ENCODE measurements at regions of chr7 and their contacts with region 1.

Region 1: DNA sequence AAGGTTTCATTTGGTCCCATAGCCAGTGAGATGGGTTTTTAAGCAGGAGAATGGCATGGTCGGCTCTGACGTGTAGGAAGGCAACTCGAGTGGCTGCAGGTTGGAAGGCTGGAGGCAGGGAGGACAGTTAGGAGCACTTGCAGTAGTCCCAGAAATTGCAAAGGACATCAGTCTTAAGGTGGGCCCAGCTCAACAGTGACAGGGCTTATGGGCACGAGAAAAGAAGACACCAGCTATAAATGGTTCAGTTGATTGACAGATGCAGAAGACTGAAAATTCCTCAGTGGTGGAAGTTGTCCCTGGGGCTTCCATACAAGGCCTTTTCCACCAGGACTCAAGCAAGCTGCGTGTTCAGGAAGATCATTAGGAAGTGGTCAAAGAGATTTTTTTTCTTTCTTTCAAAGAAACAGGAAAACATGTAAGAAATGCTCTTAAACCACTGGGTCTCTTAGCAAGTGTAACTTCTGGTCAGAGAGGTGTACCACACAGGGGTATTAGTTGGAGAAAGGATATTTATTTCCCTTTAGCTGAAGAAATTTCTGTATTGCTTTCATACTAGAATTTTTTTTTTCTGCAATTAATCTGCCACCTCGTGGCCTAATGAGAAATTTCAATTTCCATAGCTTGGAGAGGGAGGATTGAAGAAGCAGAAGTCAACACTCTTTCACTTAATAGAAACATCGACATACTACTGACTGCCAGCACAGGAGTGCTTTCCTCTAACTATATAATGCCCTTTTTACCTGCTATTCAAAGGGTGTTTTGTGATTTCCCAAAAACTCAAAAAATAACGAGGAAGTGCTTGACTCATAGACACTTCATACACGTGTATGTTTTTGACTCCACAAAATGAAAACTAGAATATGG is 177.4 kb upstream of the NAMPT start:
- DNase-seq: peak; percentile 76
- H3K4me3 Mint-ChIP-seq: no peak overlapping the region
- H3K27ac Mint-ChIP-seq: no peak overlapping the region
- H3K4me1 Mint-ChIP-seq: peaks cover 19% of the 10 kb centered on the region
- H3K27me3 Mint-ChIP-seq: no peaks in the 10 kb centered on the region

Region 2: GRCh38 chr7:106056513-106057203 is 405.6 kb before region 1 on chr7:
- intact Hi-C with region 1: loop called (anchors 2 kb)
- DNase-seq: peak; percentile 90
- H3K4me3 Mint-ChIP-seq: no peak overlapping the region
- H3K27ac Mint-ChIP-seq: no peak overlapping the region
- H3K4me1 Mint-ChIP-seq: peaks cover 28% of the 10 kb centered on the region
- H3K27me3 Mint-ChIP-seq: peaks cover 10% of the 10 kb centered on the region

Region 3: GRCh38 chr7:106165337-106165736 is 296.9 kb before region 1 on chr7:
- intact Hi-C with region 1: no loop called
- DNase-seq: no peak
- H3K4me3 Mint-ChIP-seq: no peak overlapping the region
- H3K27ac Mint-ChIP-seq: no peak overlapping the region
- H3K4me1 Mint-ChIP-seq: peaks cover 3% of the 10 kb centered on the region
- H3K27me3 Mint-ChIP-seq: peaks cover 23% of the 10 kb centered on the region

Region 4: DNA sequence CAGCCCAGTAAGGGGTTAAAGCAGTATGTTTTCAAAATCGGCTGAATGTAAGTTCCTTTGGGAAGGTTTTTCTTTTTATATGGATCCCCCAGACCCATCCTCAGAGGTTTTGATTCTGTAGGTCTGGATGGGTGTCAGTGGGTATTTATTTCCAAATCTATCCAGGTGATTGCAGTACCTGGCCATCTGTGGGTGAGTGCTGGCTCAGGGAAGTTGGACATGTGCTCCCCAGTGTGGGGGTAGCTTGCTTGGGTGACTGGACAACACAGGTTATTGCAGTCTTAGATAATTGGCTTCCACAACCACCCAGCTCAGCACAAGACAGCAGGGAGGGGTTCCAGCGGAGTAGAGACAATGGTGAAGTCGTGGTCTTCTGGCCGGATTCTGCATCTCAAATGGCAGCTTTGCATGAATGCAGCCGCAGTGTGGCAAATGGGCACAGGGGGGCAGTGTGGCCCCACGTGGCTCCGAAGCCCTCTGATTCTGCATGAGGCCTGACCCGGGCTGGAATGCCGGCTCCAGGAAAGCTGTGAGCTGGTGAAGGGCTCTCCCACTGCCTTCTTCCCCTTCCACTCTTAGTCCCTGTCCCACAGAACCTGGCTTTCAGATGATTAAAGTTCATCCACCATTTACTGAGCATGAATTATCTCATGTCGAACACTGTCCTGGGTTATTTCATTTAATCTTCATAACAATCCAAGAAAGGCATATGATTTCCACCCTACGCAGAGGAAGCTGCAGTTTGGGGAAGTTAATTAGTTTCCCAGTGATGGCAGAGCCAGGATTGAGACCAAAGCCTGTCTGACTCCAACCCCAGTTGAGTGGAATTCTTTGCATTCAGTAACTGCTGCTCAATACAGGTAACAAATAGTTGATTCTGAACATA is 285.6 kb before region 1 on chr7:
- intact Hi-C with region 1: loop called (anchors 1 kb)
- DNase-seq: peak; percentile 91
- H3K4me3 Mint-ChIP-seq: no peak overlapping the region
- H3K27ac Mint-ChIP-seq: no peak overlapping the region
- H3K4me1 Mint-ChIP-seq: peaks cover 4% of the 10 kb centered on the region
- H3K27me3 Mint-ChIP-seq: peaks cover 22% of the 10 kb centered on the region

Region 5: DNA sequence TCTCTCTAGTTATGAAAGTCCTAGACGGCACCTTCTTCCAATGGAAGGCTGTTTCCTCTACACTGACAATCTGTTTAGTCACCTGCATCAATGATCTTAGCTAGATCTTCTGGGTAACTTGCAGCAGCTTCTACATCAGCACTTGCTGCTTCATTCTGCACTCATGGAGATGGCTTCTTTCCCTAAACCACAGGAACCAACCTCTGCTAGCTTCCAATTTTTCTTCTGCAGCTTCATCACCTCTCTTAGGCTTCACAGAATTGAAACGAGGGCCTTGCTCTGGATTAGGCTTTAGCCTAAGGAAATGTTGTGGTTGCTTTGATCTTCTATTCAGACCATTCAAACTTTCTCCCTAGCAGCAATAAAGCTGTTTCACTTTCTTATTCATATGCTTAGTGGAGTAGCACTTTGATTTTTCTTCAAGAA is 202.1 kb before region 1 on chr7:
- intact Hi-C with region 1: loop called (anchors 5 kb)
- DNase-seq: peak; percentile 73
- H3K4me3 Mint-ChIP-seq: peak overlapping the region; percentile 62
- H3K27ac Mint-ChIP-seq: peak overlapping the region; percentile 78
- H3K4me1 Mint-ChIP-seq: peaks cover 37% of the 10 kb centered on the region
- H3K27me3 Mint-ChIP-seq: no peaks in the 10 kb centered on the region

Region 6: DNA sequence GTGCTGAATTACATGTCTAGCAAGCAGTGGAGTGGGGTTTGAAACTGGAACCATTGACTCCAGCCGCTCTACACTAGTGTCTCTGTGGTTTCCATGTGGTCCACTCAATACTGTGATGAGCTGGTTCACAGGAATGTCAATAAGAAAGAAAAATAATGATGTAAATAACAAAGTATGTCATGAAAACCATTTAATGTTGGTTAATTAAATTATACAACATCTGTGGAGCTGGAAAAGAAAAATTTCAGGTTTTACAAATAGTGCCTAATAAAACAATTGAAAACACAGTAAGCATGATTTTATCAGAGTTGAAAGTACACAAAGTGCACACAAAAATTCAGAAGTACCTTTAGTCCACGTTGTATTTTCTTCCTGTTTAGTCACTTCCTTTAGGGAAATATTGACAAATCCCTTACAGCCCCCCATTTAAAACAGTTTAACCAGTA is 148.7 kb before region 1 on chr7:
- intact Hi-C with region 1: no loop called
- DNase-seq: no peak
- H3K4me3 Mint-ChIP-seq: no peak overlapping the region
- H3K27ac Mint-ChIP-seq: no peak overlapping the region
- H3K4me1 Mint-ChIP-seq: peaks cover 16% of the 10 kb centered on the region
- H3K27me3 Mint-ChIP-seq: peaks cover 2% of the 10 kb centered on the region

Region 7: GRCh38 chr7:106367018-106367420 is 95.2 kb before region 1 on chr7:
- intact Hi-C with region 1: loop called (anchors 5 kb)
- DNase-seq: no peak
- H3K4me3 Mint-ChIP-seq: no peak overlapping the region
- H3K27ac Mint-ChIP-seq: peak overlapping the region; percentile 59
- H3K4me1 Mint-ChIP-seq: peaks cover 26% of the 10 kb centered on the region
- H3K27me3 Mint-ChIP-seq: peaks cover 14% of the 10 kb centered on the region

Region 8: DNA sequence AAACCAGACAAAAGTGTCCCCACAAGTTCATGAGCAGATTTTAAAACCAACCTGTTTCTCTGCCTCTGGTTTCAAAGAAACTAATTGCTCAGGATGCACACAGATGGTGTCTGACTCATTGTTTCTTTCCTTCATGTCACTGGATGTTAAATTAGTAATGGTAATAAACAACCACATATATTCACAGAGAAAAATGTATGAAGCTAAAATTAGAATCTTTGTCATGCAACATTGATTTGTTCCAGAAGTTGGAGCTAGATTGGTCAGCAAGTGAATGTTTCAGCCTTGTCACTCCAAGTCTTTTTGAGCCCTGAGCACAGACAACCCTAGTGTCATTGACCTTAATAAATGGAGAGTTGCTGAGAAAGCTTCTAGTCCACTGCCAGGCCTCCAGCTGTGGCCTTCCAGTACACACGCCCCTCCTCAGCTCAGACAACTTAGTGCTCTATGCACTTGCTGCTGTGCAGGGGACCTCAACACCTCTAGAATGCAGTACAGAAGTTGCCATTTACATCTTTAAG is 22.9 kb after region 1 on chr7:
- intact Hi-C with region 1: loop called (anchors 2 kb)
- DNase-seq: peak; percentile 55
- H3K4me3 Mint-ChIP-seq: peak overlapping the region; percentile 11
- H3K27ac Mint-ChIP-seq: peak overlapping the region; percentile 82
- H3K4me1 Mint-ChIP-seq: peaks cover 43% of the 10 kb centered on the region
- H3K27me3 Mint-ChIP-seq: no peaks in the 10 kb centered on the region